Naive thymus-derived CD4-positive, alpha-beta T cell (primary cell): ENCODE measurements at regions of chr9 and their contacts with region 1.

Region 1: DNA sequence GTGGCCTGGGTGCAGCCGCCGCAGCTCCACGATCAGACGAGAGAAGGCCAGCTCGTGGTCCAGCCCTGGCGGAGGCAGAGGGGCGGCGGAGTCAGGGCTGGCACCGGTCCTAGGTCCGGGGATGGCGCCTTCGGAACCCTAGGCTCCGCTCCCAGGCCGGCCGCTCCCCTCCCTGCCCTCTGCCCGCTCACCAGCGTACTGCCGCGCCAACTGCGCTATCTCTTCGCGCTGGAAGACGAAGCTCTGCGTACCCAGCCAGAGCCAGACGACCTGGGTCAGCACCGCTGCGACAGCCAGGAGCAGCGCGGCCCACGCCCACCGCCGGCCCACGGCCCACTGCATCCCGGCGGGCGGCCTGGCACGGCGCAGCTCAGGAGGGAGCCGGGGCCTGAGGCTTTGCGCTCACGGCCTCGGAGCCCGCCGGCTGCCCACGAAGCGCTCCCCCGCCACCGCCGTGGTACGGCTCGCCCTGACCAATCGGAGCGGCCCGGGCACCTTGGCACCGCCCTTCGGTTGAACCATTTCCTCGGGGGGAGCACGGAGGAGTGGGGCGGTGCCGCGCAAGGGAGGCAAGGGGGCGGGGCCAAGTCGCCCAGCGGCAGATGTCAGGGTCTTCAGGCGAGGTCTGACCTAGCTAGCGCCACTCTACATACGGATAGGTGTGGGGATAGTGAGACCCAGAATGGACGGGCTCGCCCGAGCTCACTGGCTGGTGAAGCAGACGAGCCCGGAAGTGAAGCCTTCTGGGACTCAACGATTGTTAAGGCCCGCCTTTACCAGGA is at the start of gene SIGMAR1:
- DNase-seq: peak; percentile 88 to 97 (median 95)
- ATAC-seq: peak; percentile 97
- H3K4me3 ChIP-seq: peak within 1 kb of the TSS; percentile 94
- H3K4me3 Mint-ChIP-seq: peak within 1 kb of the TSS; percentile 88 to 93 (median 90)
- H3K27ac ChIP-seq: peak within 1 kb of the TSS; percentile 70
- H3K27ac Mint-ChIP-seq: peak within 1 kb of the TSS; percentile 88 to 98 (median 95)
- H3K4me1 ChIP-seq: peaks cover 21 to 22% of the 10 kb centered on the region in 2 donors
- H3K4me1 Mint-ChIP-seq: peaks cover 26 to 45% (median 37%) of the 10 kb centered on the region in 7 donors
- H3K27me3 ChIP-seq: no peaks in the 10 kb centered on the region
- H3K27me3 Mint-ChIP-seq: no peaks in the 10 kb centered on the region
- total RNA-seq, gene SIGMAR1: 20.7 to 63.8 (median 46.0) TPM

Region 2: GRCh38 chr9:34178520-34179212 is 458.9 kb before region 1 on chr9 and contains the start of gene UBAP1:
- CTCF ChIA-PET with region 1: no interaction called
- POLR2A ChIA-PET with region 1: no interaction called
- intact Hi-C with region 1: loop called in 1 of 2 experiments (anchors 10 kb)
- DNase-seq: peak; percentile 83 to 97 (median 93)
- ATAC-seq: peak; percentile 99
- H3K4me3 ChIP-seq: peak within 1 kb of the TSS; percentile 93
- H3K4me3 Mint-ChIP-seq: peak within 1 kb of the TSS; percentile 93 to 100 (median 96)
- H3K27ac ChIP-seq: peak within 1 kb of the TSS; percentile 97
- H3K27ac Mint-ChIP-seq: peak within 1 kb of the TSS; percentile 94 to 99 (median 98)
- H3K4me1 ChIP-seq: peaks cover 0 to 8% of the 10 kb centered on the region in 2 donors
- H3K4me1 Mint-ChIP-seq: peaks cover 7 to 33% (median 21%) of the 10 kb centered on the region in 7 donors
- H3K27me3 ChIP-seq: no peaks in the 10 kb centered on the region
- H3K27me3 Mint-ChIP-seq: no peaks in the 10 kb centered on the region
- total RNA-seq, gene UBAP1: 31.1 to 39.9 (median 32.8) TPM

Region 3: GRCh38 chr9:34458013-34458958 is 179.3 kb before region 1 on chr9 and contains the starts of genes DNAI1 and FAM219A:
- CTCF ChIA-PET with region 1: no interaction called
- POLR2A ChIA-PET with region 1: no interaction called
- intact Hi-C with region 1: loop called (anchors 1 kb)
- DNase-seq: peak; percentile 97 to 100 (median 99)
- ATAC-seq: peak; percentile 98
- H3K4me3 ChIP-seq: peak within 1 kb of the TSS; percentile 68
- H3K4me3 Mint-ChIP-seq: peak within 1 kb of the TSS; percentile 86 to 93 (median 92)
- H3K27ac ChIP-seq: peak within 1 kb of the TSS; percentile 41
- H3K27ac Mint-ChIP-seq: peak within 1 kb of the TSS; percentile 57 to 93 (median 82)
- H3K4me1 ChIP-seq: peaks cover 13 to 16% of the 10 kb centered on the region in 2 donors
- H3K4me1 Mint-ChIP-seq: peaks cover 28 to 46% (median 38%) of the 10 kb centered on the region in 7 donors
- H3K27me3 ChIP-seq: no peaks in the 10 kb centered on the region
- H3K27me3 Mint-ChIP-seq: peaks cover 0 to 23% (median 6%) of the 10 kb centered on the region in 5 donors
- total RNA-seq, gene DNAI1: not detected
- total RNA-seq, gene FAM219A: 12.3 to 14.6 (median 13.4) TPM

Region 4: GRCh38 chr9:34526026-34526425 is 111.5 kb before region 1 on chr9:
- CTCF ChIA-PET with region 1: no interaction called
- POLR2A ChIA-PET with region 1: no interaction called
- intact Hi-C with region 1: no loop called
- DNase-seq: no peak
- ATAC-seq: no peak
- H3K4me3 ChIP-seq: no peak overlapping the region
- H3K4me3 Mint-ChIP-seq: no peak overlapping the region
- H3K27ac ChIP-seq: no peak overlapping the region
- H3K27ac Mint-ChIP-seq: no peak overlapping the region
- H3K4me1 ChIP-seq: peaks cover 7 to 10% of the 10 kb centered on the region in 2 donors
- H3K4me1 Mint-ChIP-seq: peaks cover 5 to 19% (median 10%) of the 10 kb centered on the region in 7 donors
- H3K27me3 ChIP-seq: no peaks in the 10 kb centered on the region
- H3K27me3 Mint-ChIP-seq: peaks cover 13 to 64% (median 22%) of the 10 kb centered on the region in 5 donors

Region 5: DNA sequence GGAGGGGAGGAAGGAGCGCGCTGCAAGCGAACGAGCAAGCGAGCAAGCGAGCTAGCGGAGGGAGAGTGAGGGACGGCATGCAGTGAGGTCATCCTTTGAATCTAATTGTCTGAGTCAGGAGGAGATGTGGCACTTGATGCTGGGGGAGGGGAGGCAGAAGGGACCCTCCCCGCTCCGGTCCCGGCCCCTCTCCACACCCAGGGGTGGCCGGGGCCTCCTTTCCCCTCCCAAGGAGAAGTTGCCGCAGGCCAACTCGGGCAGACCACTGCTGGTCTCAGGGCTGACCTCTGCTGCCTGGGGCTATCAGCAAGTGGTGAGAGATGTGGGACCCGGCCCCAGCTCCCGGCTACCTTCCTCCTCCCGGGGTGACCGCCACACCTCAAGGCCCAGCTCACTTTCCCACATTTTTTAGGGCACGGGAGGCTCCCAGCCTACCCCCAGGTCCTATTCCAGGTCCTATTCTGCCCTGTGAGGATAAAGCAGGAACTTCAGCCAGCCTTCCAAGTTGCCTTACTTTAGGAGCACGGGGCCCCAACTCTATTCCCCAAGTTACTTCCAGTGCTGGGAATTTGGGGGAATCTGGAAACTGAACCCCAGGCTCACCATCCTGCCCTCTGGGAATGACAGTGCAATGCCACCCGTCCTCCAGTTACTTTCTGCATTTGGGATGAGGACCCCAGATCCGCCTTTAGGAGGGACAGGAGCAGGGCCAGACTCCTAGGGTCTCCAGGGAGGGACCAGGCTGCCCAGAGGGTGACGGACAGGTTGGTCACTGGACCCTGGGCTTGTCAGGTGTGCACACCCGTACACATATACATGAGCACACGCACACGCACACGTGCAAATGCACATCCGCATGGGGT is 59.1 kb before region 1 on chr9:
- CTCF ChIA-PET with region 1: no interaction called
- POLR2A ChIA-PET with region 1: interaction called, 10 read pairs
- intact Hi-C with region 1: no loop called
- DNase-seq: no peak
- ATAC-seq: peak; percentile 19
- H3K4me3 ChIP-seq: no peak overlapping the region
- H3K4me3 Mint-ChIP-seq: peak overlapping the region in 5 of 10 donors; percentile 36 to 80 (median 46)
- H3K27ac ChIP-seq: no peak overlapping the region
- H3K27ac Mint-ChIP-seq: no peak overlapping the region
- H3K4me1 ChIP-seq: peaks cover 0 to 5% of the 10 kb centered on the region in 2 donors
- H3K4me1 Mint-ChIP-seq: peaks cover 0 to 18% (median 12%) of the 10 kb centered on the region in 7 donors
- H3K27me3 ChIP-seq: peaks cover 0 to 15% of the 10 kb centered on the region in 2 donors
- H3K27me3 Mint-ChIP-seq: peaks cover 59 to 74% (median 70%) of the 10 kb centered on the region in 5 donors

Region 6: GRCh38 chr9:34611829-34612630 is 25.5 kb before region 1 on chr9 and contains the start of gene RPP25L:
- CTCF ChIA-PET with region 1: interaction called, 98 read pairs
- POLR2A ChIA-PET with region 1: interaction called, 55 read pairs
- intact Hi-C with region 1: loop called (anchors 1 kb)
- DNase-seq: peak; percentile 75 to 94 (median 86)
- ATAC-seq: peak; percentile 96
- H3K4me3 ChIP-seq: peak within 1 kb of the TSS; percentile 89
- H3K4me3 Mint-ChIP-seq: peak within 1 kb of the TSS; percentile 84 to 96 (median 90)
- H3K27ac ChIP-seq: peak within 1 kb of the TSS; percentile 87
- H3K27ac Mint-ChIP-seq: peak within 1 kb of the TSS; percentile 84 to 96 (median 93)
- H3K4me1 ChIP-seq: peaks cover 10 to 17% of the 10 kb centered on the region in 2 donors
- H3K4me1 Mint-ChIP-seq: peaks cover 6 to 28% (median 21%) of the 10 kb centered on the region in 7 donors
- H3K27me3 ChIP-seq: no peaks in the 10 kb centered on the region
- H3K27me3 Mint-ChIP-seq: no peaks in the 10 kb centered on the region
- total RNA-seq, gene RPP25L: 8.8 to 27.3 (median 25.1) TPM

Region 7: DNA sequence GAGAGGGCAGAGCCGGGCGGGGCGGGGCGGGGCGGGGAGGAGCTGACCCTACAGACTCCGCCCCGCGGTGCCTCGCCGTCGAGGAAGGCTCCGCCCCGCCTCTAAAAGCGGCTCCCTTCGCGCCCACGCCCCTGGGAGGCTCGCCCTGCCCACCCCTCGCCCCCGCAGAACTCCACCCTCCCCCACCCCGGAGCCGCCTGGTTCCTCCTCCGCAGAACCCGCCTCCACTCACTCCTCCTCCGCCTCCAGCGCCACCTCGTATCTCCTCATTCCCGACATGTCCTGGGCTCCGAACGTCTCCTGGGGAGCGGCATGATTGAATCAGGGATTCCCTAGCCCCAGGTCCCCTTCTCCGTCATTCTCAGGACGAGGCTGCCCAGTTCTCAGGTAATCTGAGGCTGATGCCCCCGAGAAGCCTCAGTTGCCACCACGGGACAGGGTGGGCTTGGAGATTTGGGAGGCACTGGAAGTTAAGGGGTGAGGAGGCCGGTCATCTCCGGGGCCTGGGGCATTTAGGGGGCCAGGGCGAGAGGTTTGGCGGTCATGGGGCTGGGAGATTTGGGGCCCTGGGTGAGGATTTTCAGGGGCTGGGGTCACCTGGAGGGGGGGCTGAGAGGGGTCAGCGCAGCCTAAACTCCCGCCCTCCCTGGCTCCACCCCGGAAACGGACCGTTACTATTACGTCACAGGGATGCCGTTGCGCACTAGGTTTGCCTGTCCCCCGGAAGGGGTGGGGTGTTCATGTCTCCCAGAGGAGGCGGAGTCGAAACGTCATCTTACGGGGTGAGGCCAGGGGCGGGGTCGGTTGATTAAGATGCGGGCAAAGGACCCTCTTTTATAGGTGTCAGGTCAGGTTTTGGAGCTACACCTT is 28.1 kb after region 1 on chr9:
- CTCF ChIA-PET with region 1: interaction called, 17 read pairs
- POLR2A ChIA-PET with region 1: interaction called, 29 read pairs
- intact Hi-C with region 1: loop called (anchors 1 kb)
- DNase-seq: peak; percentile 74 to 90 (median 84)
- ATAC-seq: peak; percentile 90
- H3K4me3 ChIP-seq: peak overlapping the region; percentile 99
- H3K4me3 Mint-ChIP-seq: peak overlapping the region; percentile 89 to 97 (median 94)
- H3K27ac ChIP-seq: peak overlapping the region; percentile 98
- H3K27ac Mint-ChIP-seq: peak overlapping the region; percentile 86 to 98 (median 97)
- H3K4me1 ChIP-seq: peaks cover 33 to 40% of the 10 kb centered on the region in 2 donors
- H3K4me1 Mint-ChIP-seq: peaks cover 37 to 58% (median 50%) of the 10 kb centered on the region in 7 donors
- H3K27me3 ChIP-seq: no peaks in the 10 kb centered on the region
- H3K27me3 Mint-ChIP-seq: no peaks in the 10 kb centered on the region